ENCODE measurements at regions of chr11 and their contacts with region 1.

Region 1: DNA sequence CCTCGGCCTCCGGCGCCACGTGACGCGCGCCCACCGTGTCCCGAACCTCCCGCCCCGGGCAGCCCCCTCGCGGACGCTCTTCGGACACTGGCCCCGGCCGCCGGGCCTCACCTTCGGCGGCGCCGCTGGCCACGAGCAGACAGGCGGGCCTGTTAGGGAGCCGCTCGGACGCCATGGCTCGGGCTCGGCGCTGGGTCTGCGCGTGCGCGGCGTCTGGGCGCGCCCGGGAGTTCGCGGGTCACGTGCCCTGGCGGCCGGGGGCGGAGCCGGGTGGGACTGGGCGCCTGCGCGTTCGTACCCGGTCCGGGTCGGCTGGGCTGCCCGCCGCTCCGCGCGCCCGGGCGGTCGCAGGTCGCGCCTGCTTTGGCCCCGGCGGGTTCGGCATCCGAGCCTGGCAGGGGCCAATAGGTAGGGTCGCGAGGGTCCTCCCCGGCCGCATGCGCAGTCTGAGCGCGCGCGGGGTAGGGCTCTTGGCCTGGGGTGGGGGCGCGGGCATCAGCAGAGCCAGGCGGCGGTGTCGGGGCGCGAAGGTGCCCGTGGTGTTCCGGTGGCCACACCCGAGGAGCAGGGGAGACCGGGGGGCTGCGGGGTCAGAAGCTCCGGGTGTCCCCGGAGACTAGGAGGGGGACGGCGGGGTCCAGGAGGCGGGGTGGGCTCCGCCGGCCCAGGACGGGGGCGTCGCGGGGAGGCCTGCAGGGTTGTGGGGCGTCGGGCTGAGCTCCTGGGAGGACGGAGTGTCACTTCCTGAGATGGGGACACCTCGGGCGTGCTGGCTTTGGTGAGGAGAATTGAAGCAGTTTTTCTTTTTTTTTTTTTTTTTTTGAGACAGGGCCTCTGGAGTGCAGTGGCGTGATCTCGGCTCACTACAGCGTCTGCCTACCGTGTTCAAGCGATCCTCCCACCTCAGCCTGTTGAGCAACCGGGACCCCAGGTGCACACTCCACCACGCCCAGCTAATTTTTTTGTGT is at the start of gene GATD1:
- DNase-seq: peak; percentile 98
- ATAC-seq: peak; percentile 87
- H3K4me3 Mint-ChIP-seq: peak within 1 kb of the TSS; percentile 81
- H3K27ac Mint-ChIP-seq: peak within 1 kb of the TSS; percentile 69
- H3K4me1 Mint-ChIP-seq: peaks cover 16% of the 10 kb centered on the region
- H3K27me3 Mint-ChIP-seq: no peaks in the 10 kb centered on the region
- CTCF ChIP-seq: no peak
- total RNA-seq, gene GATD1: 60.3 and 63.3 TPM in 2 replicates

Region 2: DNA sequence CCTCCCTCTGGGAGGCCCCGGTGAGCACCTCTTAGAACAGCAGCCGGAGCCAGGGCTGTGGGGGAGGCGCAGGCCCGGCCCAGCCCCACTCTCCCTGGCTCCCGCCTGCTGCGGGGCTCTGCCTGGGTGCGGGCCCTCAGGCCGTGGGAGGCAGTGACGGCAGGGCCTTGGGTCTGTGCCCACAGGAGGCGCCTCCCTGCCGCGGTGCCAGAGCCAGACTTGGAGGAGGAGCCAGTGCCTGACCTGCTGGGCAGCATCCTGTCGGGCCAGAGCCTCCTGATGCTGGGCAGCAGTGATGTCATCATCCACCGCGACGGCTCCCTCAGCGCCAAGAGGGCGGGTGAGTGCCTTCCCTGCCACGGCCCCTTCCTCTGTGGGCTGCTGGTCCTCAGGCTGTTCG is 171.3 kb before region 1 on chr11:
- CTCF ChIA-PET with region 1: no interaction called
- POLR2A ChIA-PET with region 1: no interaction called
- intact Hi-C with region 1: no loop called
- DNase-seq: no peak
- ATAC-seq: no peak
- H3K4me3 Mint-ChIP-seq: no peak overlapping the region
- H3K27ac Mint-ChIP-seq: no peak overlapping the region
- H3K4me1 Mint-ChIP-seq: no peaks in the 10 kb centered on the region
- H3K27me3 Mint-ChIP-seq: no peaks in the 10 kb centered on the region
- CTCF ChIP-seq: no peak

Region 3: DNA sequence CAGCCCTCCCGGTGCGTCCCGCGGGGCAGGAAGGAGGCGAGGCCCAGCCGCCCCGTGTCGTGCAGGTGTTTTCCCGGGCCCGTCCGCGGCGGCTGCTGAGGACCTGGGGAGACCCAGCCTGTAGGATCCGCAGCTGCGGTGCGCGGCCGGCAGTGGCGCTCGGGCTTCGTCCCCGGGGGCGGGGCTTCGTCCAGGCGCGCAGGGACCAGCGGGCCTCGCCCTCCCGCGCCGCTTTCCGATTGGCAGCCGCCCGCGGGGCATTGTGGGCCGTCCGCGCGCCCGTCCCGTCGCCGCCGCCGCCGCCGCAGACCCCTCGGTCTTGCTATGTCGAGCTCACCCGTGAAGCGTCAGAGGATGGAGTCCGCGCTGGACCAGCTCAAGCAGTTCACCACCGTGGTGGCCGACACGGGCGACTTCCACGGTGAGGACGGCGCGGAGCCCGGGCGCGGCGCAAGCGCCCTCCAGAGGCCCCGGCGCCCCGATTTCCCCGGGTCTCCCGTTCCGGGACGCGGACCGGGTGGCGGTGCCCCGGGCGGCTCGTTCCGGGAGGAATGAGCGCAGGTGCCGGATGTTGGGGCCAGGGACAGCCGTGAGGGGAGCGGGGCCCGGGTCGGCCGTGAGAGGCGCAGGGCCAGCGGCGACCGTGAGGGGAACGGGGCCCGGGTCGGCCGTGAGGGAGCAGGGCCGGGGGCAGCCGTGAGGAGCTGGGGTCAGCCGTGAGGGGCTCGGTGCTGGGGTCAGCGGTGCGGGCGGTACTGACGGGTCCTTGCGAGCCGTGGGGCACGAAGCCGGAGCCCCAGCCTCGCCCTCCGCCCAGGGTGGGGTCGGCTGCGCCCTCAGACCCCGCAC is 30.2 kb before region 1 on chr11 and contains the start of gene TALDO1:
- CTCF ChIA-PET with region 1: no interaction called
- POLR2A ChIA-PET with region 1: interaction called, 4 read pairs
- intact Hi-C with region 1: loop called (anchors 1 kb)
- DNase-seq: peak; percentile 91
- ATAC-seq: peak; percentile 91
- H3K4me3 Mint-ChIP-seq: peak within 1 kb of the TSS; percentile 86
- H3K27ac Mint-ChIP-seq: peak within 1 kb of the TSS; percentile 82
- H3K4me1 Mint-ChIP-seq: peaks cover 24% of the 10 kb centered on the region
- H3K27me3 Mint-ChIP-seq: no peaks in the 10 kb centered on the region
- CTCF ChIP-seq: no peak
- total RNA-seq, gene TALDO1: 194 and 244 TPM in 2 replicates

Region 4: GRCh38 chr11:765025-765801 is 12.4 kb before region 1 on chr11:
- CTCF ChIA-PET with region 1: no interaction called
- POLR2A ChIA-PET with region 1: no interaction called
- intact Hi-C with region 1: loop called (anchors 1 kb)
- DNase-seq: peak; percentile 55
- ATAC-seq: peak; percentile 91
- H3K4me3 Mint-ChIP-seq: no peak overlapping the region
- H3K27ac Mint-ChIP-seq: no peak overlapping the region
- H3K4me1 Mint-ChIP-seq: peaks cover 3% of the 10 kb centered on the region
- H3K27me3 Mint-ChIP-seq: no peaks in the 10 kb centered on the region
- CTCF ChIP-seq: no peak

Region 5: DNA sequence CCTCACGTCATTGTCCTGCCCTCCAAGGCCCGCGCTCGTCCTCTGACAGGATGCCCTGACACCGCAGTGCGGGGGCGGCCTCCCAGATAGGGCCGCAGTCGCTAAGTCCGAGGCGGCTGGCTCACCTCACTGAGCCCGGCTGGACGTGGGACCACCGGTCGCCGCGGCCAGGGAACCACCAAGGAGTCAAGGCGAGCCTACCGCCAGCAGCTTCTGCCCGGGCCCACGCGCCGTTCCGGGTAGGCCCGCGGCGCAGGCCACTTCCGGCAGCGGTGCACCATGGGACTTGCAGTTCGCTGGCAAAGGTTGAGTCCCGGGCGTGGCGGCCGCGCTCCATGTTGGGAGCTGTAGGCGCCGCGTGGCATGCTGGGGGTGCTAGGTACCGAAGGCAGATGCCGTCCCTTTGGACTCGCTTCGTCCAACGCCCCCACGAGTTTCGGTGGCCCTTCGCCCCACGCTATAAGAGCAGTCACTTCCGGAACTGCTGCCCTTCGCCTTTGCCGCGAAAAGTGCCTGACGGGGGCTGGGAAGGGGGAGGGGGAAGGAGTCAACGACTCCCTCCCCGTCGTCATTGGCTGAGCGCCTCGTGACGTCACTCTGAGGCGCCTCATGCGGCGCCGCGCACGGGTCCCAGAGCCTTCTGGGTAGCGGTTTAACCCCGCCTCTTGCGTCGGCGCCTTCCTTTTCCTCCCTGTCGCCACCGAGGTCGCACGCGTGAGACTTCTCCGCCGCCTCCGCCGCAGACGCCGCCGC is 31.9 kb after region 1 on chr11 and contains the start of gene RPLP2:
- CTCF ChIA-PET with region 1: no interaction called
- POLR2A ChIA-PET with region 1: interaction called, 10 read pairs
- intact Hi-C with region 1: no loop called
- DNase-seq: peak; percentile 97
- ATAC-seq: peak; percentile 82
- H3K4me3 Mint-ChIP-seq: peak within 1 kb of the TSS; percentile 91
- H3K27ac Mint-ChIP-seq: peak within 1 kb of the TSS; percentile 98
- H3K4me1 Mint-ChIP-seq: peaks cover 37% of the 10 kb centered on the region
- H3K27me3 Mint-ChIP-seq: no peaks in the 10 kb centered on the region
- CTCF ChIP-seq: no peak
- total RNA-seq, gene RPLP2: 4,124 and 4,449 TPM in 2 replicates

Region 6: DNA sequence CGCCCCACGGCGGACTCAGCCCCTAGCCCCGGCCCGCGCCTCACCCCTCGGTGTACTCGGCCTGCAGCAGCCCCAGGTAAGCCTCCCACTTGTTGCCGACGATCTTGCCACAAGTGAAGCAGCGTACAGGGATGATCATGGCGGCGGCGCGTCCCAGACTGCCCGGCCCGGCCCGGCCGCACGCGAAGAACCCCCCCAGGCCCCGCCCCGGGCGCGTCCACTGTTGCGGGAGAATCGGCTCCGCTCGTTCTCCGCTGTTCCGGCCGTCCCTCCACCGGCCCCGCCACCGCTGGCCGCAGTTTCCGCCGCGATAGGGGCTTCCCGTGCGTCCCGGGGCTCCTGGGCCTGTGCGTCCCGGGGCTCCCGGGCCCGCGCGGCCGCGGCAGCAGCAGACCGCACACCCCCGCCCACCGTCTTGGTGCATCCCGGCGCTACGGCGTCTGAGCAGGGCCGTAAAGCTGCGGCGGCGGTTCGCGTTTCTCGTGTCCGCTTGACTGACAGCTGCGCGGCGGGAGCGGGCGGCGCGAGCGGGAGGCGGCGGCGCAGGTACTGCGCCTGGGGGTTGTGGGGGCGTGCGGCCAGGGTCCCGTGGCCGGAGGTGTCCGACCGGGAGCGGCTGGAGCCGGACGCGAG is 64.9 kb after region 1 on chr11 and contains the starts of genes POLR2L and TSPAN4:
- CTCF ChIA-PET with region 1: no interaction called
- POLR2A ChIA-PET with region 1: no interaction called
- intact Hi-C with region 1: loop called (anchors 2 kb)
- DNase-seq: peak; percentile 92
- ATAC-seq: peak; percentile 87
- H3K4me3 Mint-ChIP-seq: peak within 1 kb of the TSS; percentile 89
- H3K27ac Mint-ChIP-seq: peak within 1 kb of the TSS; percentile 83
- H3K4me1 Mint-ChIP-seq: peaks cover 35% of the 10 kb centered on the region
- H3K27me3 Mint-ChIP-seq: peaks cover 5% of the 10 kb centered on the region
- CTCF ChIP-seq: no peak
- total RNA-seq, gene POLR2L: 83.9 and 90.2 TPM in 2 replicates
- total RNA-seq, gene TSPAN4: 2.2 and 2.3 TPM in 2 replicates

Measured in activated B cell treated with CpG ODN at 0.5 μM for 24 hours (primary cell).